ENCODE measurements at regions of chr22 and their contacts with region 1.

Region 1: DNA sequence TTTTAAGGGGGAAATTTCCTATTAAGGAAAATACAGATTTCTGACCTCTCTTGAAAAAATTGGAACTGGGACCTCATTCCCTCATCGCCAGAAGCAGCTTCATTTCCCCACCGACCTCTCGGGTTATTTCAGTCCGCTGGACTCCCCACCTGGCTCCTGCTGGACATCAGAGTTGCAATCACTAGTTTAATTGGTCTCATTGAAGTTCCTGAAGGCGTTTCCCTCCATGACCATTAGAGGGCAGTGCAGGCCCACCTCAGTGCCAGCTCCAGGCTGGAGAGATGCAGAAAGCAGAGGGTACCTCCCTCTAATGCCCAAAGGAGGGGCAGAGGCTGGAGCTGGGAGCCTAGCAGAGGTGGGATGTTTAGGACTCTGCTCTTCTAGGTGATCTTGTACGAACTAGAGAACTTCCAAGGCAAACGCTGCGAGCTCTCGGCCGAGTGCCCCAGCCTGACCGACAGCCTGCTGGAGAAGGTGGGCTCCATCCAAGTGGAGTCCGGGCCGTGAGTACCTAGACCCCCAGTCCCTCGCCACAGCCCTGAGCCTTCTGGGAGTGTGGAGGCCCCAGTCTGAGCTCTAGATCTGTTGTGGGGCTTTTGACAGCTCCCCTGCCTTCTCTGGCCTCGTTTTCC is 2.7 kb downstream of the CRYBB3 start:
- DNase-seq: peak; percentile 54
- ATAC-seq: peak; percentile 54
- H3K4me3 ChIP-seq: no peak overlapping the region
- H3K4me3 Mint-ChIP-seq: no peak overlapping the region
- H3K27ac ChIP-seq: no peak overlapping the region
- H3K27ac Mint-ChIP-seq: no peak overlapping the region
- H3K4me1 ChIP-seq: no peaks in the 10 kb centered on the region
- H3K4me1 Mint-ChIP-seq: no peaks in the 10 kb centered on the region
- H3K27me3 ChIP-seq: no peaks in the 10 kb centered on the region
- H3K27me3 Mint-ChIP-seq: peaks cover 10% of the 10 kb centered on the region
- CTCF ChIP-seq: peak; percentile 95

Region 2: DNA sequence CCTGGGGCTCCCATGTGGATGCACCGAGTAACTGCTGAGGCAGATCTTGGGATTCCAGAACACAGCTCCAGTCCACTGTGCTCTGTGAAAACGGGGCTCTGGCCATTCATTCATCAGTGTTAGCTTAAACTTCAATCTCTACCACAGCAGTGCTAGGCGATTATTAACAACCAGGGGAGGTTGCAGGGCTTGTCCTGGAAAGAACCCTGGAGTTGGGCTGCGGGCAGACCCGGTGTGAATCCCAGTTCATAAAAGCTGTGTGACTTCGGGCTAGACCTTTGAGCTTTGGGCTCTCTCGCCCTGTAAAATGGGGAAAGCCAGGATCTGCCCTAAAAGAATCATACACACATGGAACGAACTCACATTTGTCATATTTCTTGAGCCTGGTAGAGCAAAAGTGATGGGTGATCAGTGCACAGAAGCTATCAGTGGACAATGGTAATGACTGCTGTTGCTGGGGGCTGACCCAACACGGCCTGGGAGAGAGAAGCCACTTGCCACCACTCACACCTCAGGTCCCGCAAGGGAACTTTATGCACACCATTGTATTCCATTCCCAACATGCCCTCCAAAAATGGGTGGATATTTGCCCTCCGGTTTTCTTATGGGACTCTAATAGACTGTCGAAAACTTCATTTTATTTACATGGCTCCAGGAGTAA is 18.3 kb before region 1 on chr22:
- CTCF ChIA-PET with region 1: interaction called, 16 read pairs
- POLR2A ChIA-PET with region 1: no interaction called
- intact Hi-C with region 1: no loop called
- DNase-seq: no peak
- ATAC-seq: no peak
- H3K4me3 ChIP-seq: no peak overlapping the region
- H3K4me3 Mint-ChIP-seq: no peak overlapping the region
- H3K27ac ChIP-seq: no peak overlapping the region
- H3K27ac Mint-ChIP-seq: no peak overlapping the region
- H3K4me1 ChIP-seq: no peaks in the 10 kb centered on the region
- H3K4me1 Mint-ChIP-seq: no peaks in the 10 kb centered on the region
- H3K27me3 ChIP-seq: no peaks in the 10 kb centered on the region
- H3K27me3 Mint-ChIP-seq: peaks cover 7% of the 10 kb centered on the region
- CTCF ChIP-seq: no peak

Region 3: DNA sequence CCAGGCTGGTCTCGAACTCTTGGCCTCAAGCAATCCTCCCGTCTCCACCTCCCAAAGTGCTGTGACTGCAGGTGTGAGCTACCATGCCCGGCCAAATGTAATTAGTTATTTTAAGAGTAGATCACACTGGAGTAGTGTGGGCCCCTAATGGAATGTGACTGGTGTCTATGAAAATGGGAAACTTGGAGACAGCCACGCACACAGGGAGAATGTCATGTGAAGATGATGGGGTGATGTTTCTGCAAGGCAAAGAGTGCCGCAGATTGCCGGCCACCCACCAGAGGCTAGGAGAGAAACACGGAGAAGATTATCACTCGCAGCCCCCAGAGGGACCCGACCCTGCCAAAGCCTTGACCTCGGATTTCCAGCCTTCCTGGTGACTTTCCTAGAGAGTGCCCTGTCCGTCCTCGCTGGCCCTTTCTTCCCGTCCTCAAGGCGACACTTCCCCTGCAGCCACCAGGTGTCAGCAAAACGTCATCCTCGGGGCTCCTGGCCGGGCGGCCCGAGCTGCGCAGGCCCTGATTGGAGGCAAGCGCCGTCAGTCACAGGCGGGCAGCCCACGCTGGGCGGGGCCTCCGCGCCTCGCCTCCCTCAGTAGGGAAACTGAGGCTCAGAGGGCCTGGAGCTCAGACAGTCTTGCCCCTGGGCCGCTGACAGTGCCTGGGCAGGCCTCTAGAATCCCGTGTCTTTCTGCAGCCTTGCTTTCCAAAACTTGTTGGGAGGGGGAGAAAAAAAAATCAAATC is 33.3 kb after region 1 on chr22:
- CTCF ChIA-PET with region 1: no interaction called
- POLR2A ChIA-PET with region 1: no interaction called
- intact Hi-C with region 1: no loop called
- DNase-seq: peak; percentile 70
- ATAC-seq: peak; percentile 85
- H3K4me3 ChIP-seq: no peak overlapping the region
- H3K4me3 Mint-ChIP-seq: no peak overlapping the region
- H3K27ac ChIP-seq: no peak overlapping the region
- H3K27ac Mint-ChIP-seq: no peak overlapping the region
- H3K4me1 ChIP-seq: peaks cover 0 to 3% of the 10 kb centered on the region in 2 donors
- H3K4me1 Mint-ChIP-seq: peaks cover 7% of the 10 kb centered on the region
- H3K27me3 ChIP-seq: peaks cover 0 to 17% (median 1%) of the 10 kb centered on the region in 4 experiments
- H3K27me3 Mint-ChIP-seq: peaks cover 42% of the 10 kb centered on the region
- CTCF ChIP-seq: peak; percentile 60